Calu3 (cell line): ENCODE measurements at regions of chr1 and their contacts with region 1.

Region 1: DNA sequence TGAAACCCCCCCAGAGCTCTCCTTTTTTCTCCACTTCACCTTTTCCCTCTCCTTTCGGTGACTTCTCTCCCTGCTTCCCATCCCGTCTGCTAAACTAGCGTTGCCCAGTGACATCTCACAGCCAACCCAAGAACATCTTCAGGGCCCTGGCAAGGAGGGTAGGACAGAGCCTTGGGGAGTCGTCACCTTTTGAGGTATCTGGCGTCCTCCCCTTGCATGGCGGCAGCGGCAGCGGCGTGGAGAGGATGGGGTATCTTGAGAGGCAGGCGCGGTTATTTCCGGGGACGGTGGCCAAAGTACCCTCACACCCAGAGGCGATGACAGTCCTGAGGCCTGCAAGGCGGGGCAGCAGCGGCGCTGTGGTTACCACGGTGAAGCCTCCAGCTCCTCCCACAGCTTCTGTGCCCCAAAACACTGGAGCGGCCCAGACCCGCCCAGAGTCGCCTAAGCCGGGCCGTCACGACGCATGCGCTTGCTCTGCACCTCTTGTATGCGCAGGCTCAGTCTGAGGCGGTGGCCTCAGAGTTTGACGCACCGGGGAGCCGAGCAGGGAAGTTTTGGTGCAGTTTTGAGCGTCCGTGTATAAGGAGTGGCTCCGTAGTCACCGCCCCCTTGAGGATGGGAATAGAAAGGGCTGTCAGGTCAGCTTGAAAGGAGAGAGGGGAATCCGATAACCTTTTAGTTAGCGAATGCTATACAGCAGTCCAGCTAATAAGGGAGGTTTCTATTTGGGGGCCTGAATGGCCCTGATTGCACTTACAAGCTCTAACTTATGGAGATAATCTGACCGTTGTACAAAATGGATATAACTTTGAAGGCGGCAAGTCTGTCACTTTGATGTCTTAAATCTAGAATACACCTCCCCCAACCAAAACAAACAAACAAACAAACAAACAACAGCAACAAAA is at the start of gene KIFAP3:
- DNase-seq: peak; percentile 97
- H3K4me3 Mint-ChIP-seq: peak within 1 kb of the TSS; percentile 90
- H3K27ac Mint-ChIP-seq: peak within 1 kb of the TSS; percentile 81
- H3K4me1 Mint-ChIP-seq: peaks cover 23% of the 10 kb centered on the region
- H3K27me3 Mint-ChIP-seq: no peaks in the 10 kb centered on the region
- CTCF ChIP-seq: no peak
- total RNA-seq, gene KIFAP3: 16.2 and 16.5 TPM in 2 replicates

Region 2: GRCh38 chr1:169933984-169934725 is 140.3 kb before region 1 on chr1:
- CTCF ChIA-PET with region 1: no interaction called
- intact Hi-C with region 1: loop called (anchors 5 kb)
- DNase-seq: peak; percentile 38
- H3K4me3 Mint-ChIP-seq: peak overlapping the region; percentile 8
- H3K27ac Mint-ChIP-seq: no peak overlapping the region
- H3K4me1 Mint-ChIP-seq: peaks cover 16% of the 10 kb centered on the region
- H3K27me3 Mint-ChIP-seq: no peaks in the 10 kb centered on the region
- CTCF ChIP-seq: no peak

Region 3: GRCh38 chr1:170290991-170291390 is 216.5 kb after region 1 on chr1:
- CTCF ChIA-PET with region 1: no interaction called
- intact Hi-C with region 1: no loop called
- DNase-seq: no peak
- H3K4me3 Mint-ChIP-seq: no peak overlapping the region
- H3K27ac Mint-ChIP-seq: no peak overlapping the region
- H3K4me1 Mint-ChIP-seq: peaks cover under 1% of the 10 kb centered on the region
- H3K27me3 Mint-ChIP-seq: no peaks in the 10 kb centered on the region
- CTCF ChIP-seq: no peak